Vagina (tissue), 2 donors: ENCODE measurements at regions of chr1 and their contacts with region 1.

Region 1: GRCh38 chr1:77164434-77164944 is 54.7 kb downstream of the PIGK start:
- DNase-seq: no peak
- H3K4me3 ChIP-seq: no peak overlapping the region
- H3K27ac ChIP-seq: no peak overlapping the region
- H3K4me1 ChIP-seq: no peaks in the 10 kb centered on the region
- H3K27me3 ChIP-seq: no peaks in the 10 kb centered on the region
- CTCF ChIP-seq: no peak
- POLR2A ChIP-seq: no peak

Region 2: DNA sequence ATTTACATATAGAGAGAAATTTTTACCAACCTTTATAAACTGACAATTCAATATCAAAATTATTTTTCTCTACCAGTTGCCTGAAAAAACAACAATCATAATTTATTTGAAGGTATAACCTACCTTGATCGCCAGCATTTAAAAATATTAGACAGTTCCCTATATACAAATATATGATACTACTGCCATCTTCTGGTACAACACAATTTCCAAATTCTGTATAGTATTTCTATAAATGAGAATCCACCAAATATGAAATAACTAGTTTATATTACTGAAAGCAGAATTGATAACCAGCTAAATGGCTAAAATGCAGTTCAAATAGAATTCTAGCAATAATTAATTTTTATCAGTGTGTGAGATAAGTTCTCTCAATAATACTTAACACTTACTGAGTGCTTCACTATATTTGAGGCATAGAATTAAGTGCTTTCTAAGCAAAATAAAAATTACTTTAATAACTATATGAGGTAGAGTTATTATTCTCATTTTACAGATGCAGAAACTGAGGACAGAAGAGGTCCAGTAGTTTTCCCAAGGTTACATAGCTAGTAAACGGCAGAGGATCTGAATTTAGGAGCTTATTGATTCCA is 20.9 kb before region 1 on chr1:
- intact Hi-C with region 1: loop called (anchors 1 kb)
- DNase-seq: no peak
- H3K4me3 ChIP-seq: no peak overlapping the region
- H3K27ac ChIP-seq: no peak overlapping the region
- H3K4me1 ChIP-seq: no peaks in the 10 kb centered on the region
- H3K27me3 ChIP-seq: no peaks in the 10 kb centered on the region
- CTCF ChIP-seq: no peak
- POLR2A ChIP-seq: no peak